ENCODE measurements at regions of chr18 and their contacts with region 1.

Region 1: GRCh38 chr18:23703057-23703986 is 14.1 kb downstream of the LAMA3 start:
- DNase-seq: peak in 1 of 2 experiments; percentile 46
- H3K4me3 ChIP-seq: no peak overlapping the region
- H3K27ac ChIP-seq: no peak overlapping the region
- H3K4me1 ChIP-seq: no peaks in the 10 kb centered on the region
- H3K27me3 ChIP-seq: no peaks in the 10 kb centered on the region
- CTCF ChIP-seq: peak; percentile 71

Region 2: GRCh38 chr18:23503038-23503962 is 200.0 kb before region 1 on chr18 and contains the start of gene RMC1:
- CTCF ChIA-PET with region 1: no interaction called
- POLR2A ChIA-PET with region 1: no interaction called
- intact Hi-C with region 1: loop called (anchors 2 kb)
- DNase-seq: peak; percentile 73 to 93
- H3K4me3 ChIP-seq: peak within 1 kb of the TSS; percentile 77
- H3K27ac ChIP-seq: peak within 1 kb of the TSS; percentile 64
- H3K4me1 ChIP-seq: peaks cover 13% of the 10 kb centered on the region
- H3K27me3 ChIP-seq: no peaks in the 10 kb centered on the region
- CTCF ChIP-seq: no peak
- total RNA-seq, gene RMC1: 14.5 and 19.6 TPM in 2 replicates

Region 3: GRCh38 chr18:23586249-23587196 is 116.8 kb before region 1 on chr18 and contains the start of gene NPC1:
- CTCF ChIA-PET with region 1: no interaction called
- POLR2A ChIA-PET with region 1: no interaction called
- intact Hi-C with region 1: loop called (anchors 2 kb)
- DNase-seq: peak; percentile 88 to 92
- H3K4me3 ChIP-seq: peak within 1 kb of the TSS; percentile 82
- H3K27ac ChIP-seq: peak within 1 kb of the TSS; percentile 97
- H3K4me1 ChIP-seq: peaks cover 19% of the 10 kb centered on the region
- H3K27me3 ChIP-seq: no peaks in the 10 kb centered on the region
- CTCF ChIP-seq: peak; percentile 75
- total RNA-seq, gene NPC1: 39.6 and 40.9 TPM in 2 replicates

Region 4: GRCh38 chr18:23756590-23757436 is 53.5 kb after region 1 on chr18:
- CTCF ChIA-PET with region 1: interaction called, 15 read pairs
- POLR2A ChIA-PET with region 1: no interaction called
- intact Hi-C with region 1: no loop called
- DNase-seq: no peak
- H3K4me3 ChIP-seq: no peak overlapping the region
- H3K27ac ChIP-seq: no peak overlapping the region
- H3K4me1 ChIP-seq: no peaks in the 10 kb centered on the region
- H3K27me3 ChIP-seq: no peaks in the 10 kb centered on the region
- CTCF ChIP-seq: no peak